Activated CD4-positive, alpha-beta T cell treated with anti-CD3 and anti-CD28 coated beads for 36 hours (primary cell): ENCODE measurements at regions of chr2 and their contacts with region 1.

Region 1: GRCh38 chr2:101998896-101999789 is 7.4 kb downstream of the IL1R2 start:
- DNase-seq: peak; percentile 69
- ATAC-seq: peak; percentile 70
- H3K4me3 Mint-ChIP-seq: peak overlapping the region; percentile 64
- H3K27ac Mint-ChIP-seq: peak overlapping the region; percentile 90
- H3K4me1 Mint-ChIP-seq: peaks cover 40% of the 10 kb centered on the region
- H3K27me3 Mint-ChIP-seq: peaks cover 3% of the 10 kb centered on the region

Region 2: GRCh38 chr2:101272045-101272784 is 726.9 kb before region 1 on chr2:
- CTCF ChIA-PET with region 1: no interaction called
- POLR2A ChIA-PET with region 1: no interaction called
- intact Hi-C with region 1: loop called in 1 of 2 experiments (anchors 2 kb)
- DNase-seq: no peak
- ATAC-seq: peak; percentile 97
- H3K4me3 Mint-ChIP-seq: no peak overlapping the region
- H3K27ac Mint-ChIP-seq: peak overlapping the region; percentile 69
- H3K4me1 Mint-ChIP-seq: peaks cover 41% of the 10 kb centered on the region
- H3K27me3 Mint-ChIP-seq: no peaks in the 10 kb centered on the region

Region 3: DNA sequence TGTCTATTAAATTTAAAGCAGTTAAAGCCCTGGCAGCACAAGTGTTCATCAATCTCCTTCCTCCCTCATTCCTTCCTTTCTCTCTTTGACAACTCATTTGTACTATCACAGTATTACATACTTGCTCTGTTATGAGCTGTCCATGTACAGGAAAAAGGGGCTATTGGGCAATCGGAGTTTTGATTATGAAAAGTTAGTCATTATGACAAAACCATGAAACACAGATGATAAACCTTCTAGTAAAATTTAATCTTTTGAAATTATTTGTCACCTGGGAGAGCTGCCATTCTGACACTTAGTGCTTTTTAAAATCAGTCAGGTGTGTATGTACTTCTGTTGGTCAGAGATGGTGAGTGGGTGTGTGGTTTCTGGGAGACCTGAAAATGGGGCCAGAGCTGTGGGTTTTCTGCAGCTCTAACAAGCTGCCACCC is 262.3 kb before region 1 on chr2:
- CTCF ChIA-PET with region 1: interaction called, 3 read pairs
- POLR2A ChIA-PET with region 1: interaction called, 3 read pairs
- intact Hi-C with region 1: loop called in 1 of 2 experiments (anchors 1 kb)
- DNase-seq: peak; percentile 77
- ATAC-seq: peak; percentile 86
- H3K4me3 Mint-ChIP-seq: no peak overlapping the region
- H3K27ac Mint-ChIP-seq: peak overlapping the region; percentile 51
- H3K4me1 Mint-ChIP-seq: peaks cover 84% of the 10 kb centered on the region
- H3K27me3 Mint-ChIP-seq: no peaks in the 10 kb centered on the region

Region 4: DNA sequence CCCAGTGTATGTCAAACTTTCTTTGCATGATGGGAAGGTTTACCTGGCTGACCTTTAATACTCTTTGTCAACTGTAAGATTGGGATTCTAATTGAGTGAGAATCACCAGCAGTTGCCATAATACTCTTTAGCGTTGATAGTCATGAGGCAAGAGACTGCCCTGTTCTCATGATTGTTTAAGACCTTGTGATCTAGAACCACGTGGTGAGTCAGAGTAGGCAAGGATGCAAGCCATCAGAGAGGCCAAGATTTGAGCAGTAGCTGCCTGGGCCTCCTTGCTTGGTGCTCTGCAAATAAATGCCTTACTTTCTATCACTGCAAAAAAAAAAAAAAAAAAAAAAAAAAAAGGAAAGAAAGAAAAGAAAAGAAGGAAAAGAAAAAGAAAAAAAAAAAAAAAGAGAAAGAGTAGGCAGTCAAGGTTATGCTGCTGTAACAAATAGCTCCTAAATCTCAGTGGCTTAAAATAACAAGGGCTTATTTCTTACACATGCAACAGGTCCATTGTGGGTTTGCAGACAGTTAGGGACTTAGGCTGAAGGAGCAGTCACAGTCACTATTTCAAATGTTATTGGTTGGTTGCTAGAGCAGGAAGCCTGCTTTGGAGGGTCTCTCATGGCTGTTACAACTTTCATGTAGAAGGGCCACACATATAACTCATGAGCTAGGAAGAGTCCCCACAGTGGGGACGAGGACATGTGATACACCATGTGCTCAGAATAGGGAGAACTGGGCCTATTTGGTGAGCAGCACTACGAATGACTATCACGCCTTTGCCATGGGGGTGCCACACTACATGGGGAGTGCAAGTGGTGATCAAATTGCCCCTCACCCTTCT is 14.3 kb after region 1 on chr2:
- CTCF ChIA-PET with region 1: interaction called, 5 read pairs
- POLR2A ChIA-PET with region 1: interaction called, 8 read pairs
- intact Hi-C with region 1: loop called in 1 of 2 experiments (anchors 2 kb)
- DNase-seq: peak; percentile 39
- ATAC-seq: peak; percentile 45
- H3K4me3 Mint-ChIP-seq: no peak overlapping the region
- H3K27ac Mint-ChIP-seq: peak overlapping the region; percentile 83
- H3K4me1 Mint-ChIP-seq: peaks cover 49% of the 10 kb centered on the region
- H3K27me3 Mint-ChIP-seq: no peaks in the 10 kb centered on the region

Region 5: GRCh38 chr2:102103992-102104871 is 105.1 kb after region 1 on chr2:
- CTCF ChIA-PET with region 1: interaction called, 3 read pairs
- POLR2A ChIA-PET with region 1: no interaction called
- intact Hi-C with region 1: loop called (anchors 2 to 5 kb)
- DNase-seq: peak; percentile 92
- ATAC-seq: peak; percentile 78
- H3K4me3 Mint-ChIP-seq: peak overlapping the region; percentile 80
- H3K27ac Mint-ChIP-seq: peak overlapping the region; percentile 84
- H3K4me1 Mint-ChIP-seq: peaks cover 59% of the 10 kb centered on the region
- H3K27me3 Mint-ChIP-seq: peaks cover 11% of the 10 kb centered on the region

Region 6: GRCh38 chr2:102251042-102251848 is 252.1 kb after region 1 on chr2:
- CTCF ChIA-PET with region 1: interaction called, 8 read pairs
- POLR2A ChIA-PET with region 1: interaction called, 4 read pairs
- intact Hi-C with region 1: loop called in 1 of 2 experiments (anchors 1 kb)
- DNase-seq: peak; percentile 85
- ATAC-seq: peak; percentile 68
- H3K4me3 Mint-ChIP-seq: peak overlapping the region; percentile 73
- H3K27ac Mint-ChIP-seq: peak overlapping the region; percentile 76
- H3K4me1 Mint-ChIP-seq: peaks cover 38% of the 10 kb centered on the region
- H3K27me3 Mint-ChIP-seq: no peaks in the 10 kb centered on the region

Region 7: DNA sequence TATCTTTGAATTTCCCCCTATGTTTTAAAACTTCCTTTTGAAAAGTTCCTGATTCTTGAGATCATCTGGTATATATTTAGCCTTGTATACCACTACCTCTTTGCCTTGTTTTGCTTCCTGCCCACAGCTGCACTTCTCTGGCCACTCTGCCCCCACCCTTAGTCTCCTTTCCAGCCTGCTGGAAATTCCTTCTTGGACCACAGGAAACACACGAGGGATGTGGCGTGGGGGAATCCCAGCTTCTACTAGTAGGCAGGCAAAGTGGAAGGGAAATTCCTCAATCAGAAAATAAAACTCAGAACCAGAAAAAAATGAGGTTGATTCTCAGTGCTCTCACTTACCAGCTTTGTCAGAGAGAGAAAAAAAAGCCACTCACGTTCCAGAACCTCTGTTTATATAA is 437.2 kb after region 1 on chr2:
- CTCF ChIA-PET with region 1: no interaction called
- POLR2A ChIA-PET with region 1: no interaction called
- intact Hi-C with region 1: loop called (anchors 2 to 5 kb)
- DNase-seq: peak; percentile 38
- ATAC-seq: no peak
- H3K4me3 Mint-ChIP-seq: no peak overlapping the region
- H3K27ac Mint-ChIP-seq: peak overlapping the region; percentile 71
- H3K4me1 Mint-ChIP-seq: peaks cover 30% of the 10 kb centered on the region
- H3K27me3 Mint-ChIP-seq: no peaks in the 10 kb centered on the region